PC-9 (cell line): ENCODE measurements at regions of chrX and their contacts with region 1.

Region 1: DNA sequence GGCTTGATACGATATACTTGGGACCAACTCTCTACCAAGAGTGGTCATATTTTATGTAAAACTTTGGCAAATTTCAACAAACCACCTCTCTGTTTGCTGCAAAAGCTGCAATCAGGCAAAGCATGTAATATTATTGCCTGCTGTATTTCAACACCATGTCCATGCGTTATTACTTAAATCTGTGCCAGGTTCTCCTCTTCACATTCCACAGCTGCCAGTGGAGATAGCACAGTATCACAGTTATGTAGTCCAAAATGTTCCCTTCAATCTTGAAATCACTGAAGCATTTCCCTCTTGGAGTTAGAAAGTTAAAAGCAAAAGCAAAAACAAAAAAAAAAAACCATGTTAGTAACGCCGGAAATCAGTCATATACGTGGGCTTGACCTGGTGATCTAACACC is 396.7 kb upstream of the MAGEC2 start:
- DNase-seq: no peak
- H3K4me3 ChIP-seq: no peak overlapping the region
- H3K27ac ChIP-seq: no peak overlapping the region
- H3K4me1 ChIP-seq: no peaks in the 10 kb centered on the region
- H3K27me3 ChIP-seq: peaks cover 5% of the 10 kb centered on the region; the same call in 1 of the 2 replicates
- CTCF ChIP-seq: no peak

Region 2: DNA sequence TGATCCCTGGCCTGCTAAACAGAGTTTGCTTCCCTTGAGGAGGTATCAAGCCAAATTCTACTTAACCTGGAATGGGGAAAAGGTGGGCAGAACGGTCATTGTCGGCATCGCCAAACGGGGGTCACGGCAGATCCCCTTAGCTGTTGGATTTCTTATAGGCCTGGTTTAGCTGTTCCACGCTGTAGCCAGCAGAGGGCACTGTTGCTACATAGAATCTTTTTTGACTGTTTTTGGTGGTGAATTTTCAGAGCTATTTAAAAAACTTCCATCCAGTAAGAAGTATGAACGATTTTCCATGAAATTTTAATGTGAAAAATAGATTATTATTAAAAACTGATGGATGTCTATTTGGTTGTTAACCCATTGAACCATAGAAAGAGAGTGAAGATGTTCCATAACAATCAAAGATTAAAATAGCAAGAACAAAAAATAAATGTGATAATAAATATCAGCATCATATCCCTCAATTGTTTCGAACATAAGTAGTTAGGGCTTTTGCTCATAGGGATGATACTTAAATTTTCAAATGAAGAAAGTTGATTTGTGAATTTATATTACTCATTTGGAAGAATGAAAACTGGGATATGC is 1835.7 kb before region 1 on chrX:
- CTCF ChIA-PET with region 1: no interaction called
- POLR2A ChIA-PET with region 1: no interaction called
- intact Hi-C with region 1: loop called (anchors 5 kb)
- DNase-seq: peak; percentile 33 to 42
- H3K4me3 ChIP-seq: no peak overlapping the region
- H3K27ac ChIP-seq: no peak overlapping the region
- H3K4me1 ChIP-seq: no peaks in the 10 kb centered on the region
- H3K27me3 ChIP-seq: no peaks in the 10 kb centered on the region
- CTCF ChIP-seq: peak; percentile 91